ENCODE measurements at regions of chr15 and their contacts with region 1.

Region 1: DNA sequence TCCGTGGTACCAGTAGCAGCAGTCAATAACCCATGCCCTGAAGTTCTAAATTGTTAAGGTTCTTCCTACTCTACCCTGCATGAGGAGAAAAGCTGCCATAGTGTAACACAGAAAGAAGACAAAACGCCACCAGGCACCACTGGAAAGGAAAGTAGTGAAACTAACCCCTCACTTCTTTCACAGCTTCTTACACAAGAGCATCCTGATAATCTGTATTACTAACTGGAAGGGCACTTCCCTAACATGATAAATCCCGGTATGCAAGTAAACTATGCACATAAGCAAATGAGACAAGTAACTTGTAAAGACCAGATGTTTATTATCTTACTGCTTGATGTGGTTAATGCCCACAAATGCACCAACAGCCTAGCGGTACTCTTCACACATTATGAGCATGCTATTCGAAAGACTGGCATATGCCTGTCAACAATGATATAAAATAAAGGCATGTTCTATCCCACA is 141.3 kb downstream of the ADAM10 start:
- DNase-seq: peak in 1 of 2 donors; percentile 60
- ATAC-seq: peak; percentile 73 to 83 (median 77)
- H3K4me3 ChIP-seq: no peak overlapping the region
- H3K4me3 Mint-ChIP-seq: peak overlapping the region; percentile 82
- H3K27ac ChIP-seq: peak overlapping the region; percentile 45
- H3K27ac Mint-ChIP-seq: peak overlapping the region; percentile 89 to 90
- H3K4me1 ChIP-seq: peaks cover 13% of the 10 kb centered on the region
- H3K4me1 Mint-ChIP-seq: peaks cover 60 to 63% of the 10 kb centered on the region in 2 donors
- H3K27me3 ChIP-seq: no peaks in the 10 kb centered on the region
- H3K27me3 Mint-ChIP-seq: no peaks in the 10 kb centered on the region
- CTCF ChIP-seq: no peak

Region 2: GRCh38 chr15:58309963-58310928 is 297.9 kb before region 1 on chr15:
- intact Hi-C with region 1: loop called (anchors 5 kb)
- DNase-seq: no peak
- ATAC-seq: no peak
- H3K4me3 ChIP-seq: no peak overlapping the region
- H3K4me3 Mint-ChIP-seq: no peak overlapping the region
- H3K27ac ChIP-seq: no peak overlapping the region
- H3K27ac Mint-ChIP-seq: no peak overlapping the region
- H3K4me1 ChIP-seq: peaks cover 23% of the 10 kb centered on the region
- H3K4me1 Mint-ChIP-seq: peaks cover 35 to 50% of the 10 kb centered on the region in 2 donors
- H3K27me3 ChIP-seq: no peaks in the 10 kb centered on the region
- H3K27me3 Mint-ChIP-seq: no peaks in the 10 kb centered on the region
- CTCF ChIP-seq: no peak

Region 3: DNA sequence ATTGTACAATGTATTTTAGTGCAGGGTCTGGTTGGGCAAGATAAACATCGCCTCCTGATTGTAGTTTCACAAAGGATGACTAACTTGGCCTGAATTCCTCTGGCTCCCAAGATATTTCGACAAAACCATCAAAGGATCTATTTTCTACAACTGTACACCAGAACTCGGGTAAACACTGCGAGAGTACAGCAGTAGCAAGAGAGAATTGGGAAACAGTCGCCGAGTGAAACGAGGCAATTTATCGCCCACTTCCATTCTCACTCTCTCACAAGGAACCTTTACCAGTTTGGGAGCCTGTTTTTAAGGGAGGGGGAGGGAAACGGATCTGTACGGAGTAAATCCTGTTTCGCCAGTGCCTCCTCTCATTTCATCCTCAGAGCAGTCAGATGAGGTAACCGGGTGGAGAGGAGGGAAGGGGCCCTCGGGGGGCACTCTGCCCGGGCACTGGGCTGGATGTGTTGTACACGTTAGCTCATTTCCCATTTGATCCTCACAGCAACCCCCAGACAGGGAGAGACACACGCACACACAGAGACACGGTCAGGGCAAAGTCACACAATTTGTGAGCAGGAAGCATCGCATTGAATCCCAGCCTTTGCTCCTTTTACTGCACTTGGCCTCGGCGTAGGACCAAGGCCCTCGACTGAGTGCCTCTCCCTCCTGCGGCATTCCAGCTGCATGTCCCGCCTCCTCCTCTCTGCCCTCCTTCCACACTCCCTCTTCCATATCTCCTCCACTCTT is 56.2 kb before region 1 on chr15:
- intact Hi-C with region 1: loop called (anchors 5 kb)
- DNase-seq: no peak
- ATAC-seq: no peak
- H3K4me3 ChIP-seq: no peak overlapping the region
- H3K4me3 Mint-ChIP-seq: peak overlapping the region; percentile 81
- H3K27ac ChIP-seq: no peak overlapping the region
- H3K27ac Mint-ChIP-seq: peak overlapping the region; percentile 41 to 54
- H3K4me1 ChIP-seq: peaks cover 36% of the 10 kb centered on the region
- H3K4me1 Mint-ChIP-seq: peaks cover 48 to 64% of the 10 kb centered on the region in 2 donors
- H3K27me3 ChIP-seq: no peaks in the 10 kb centered on the region
- H3K27me3 Mint-ChIP-seq: peaks cover 10 to 15% of the 10 kb centered on the region in 2 donors
- CTCF ChIP-seq: no peak

Region 4: GRCh38 chr15:58906225-58906624 is 298.1 kb after region 1 on chr15:
- intact Hi-C with region 1: no loop called
- DNase-seq: no peak
- ATAC-seq: no peak
- H3K4me3 ChIP-seq: no peak overlapping the region
- H3K4me3 Mint-ChIP-seq: no peak overlapping the region
- H3K27ac ChIP-seq: no peak overlapping the region
- H3K27ac Mint-ChIP-seq: peak overlapping the region; percentile 3 to 41
- H3K4me1 ChIP-seq: peaks cover 14% of the 10 kb centered on the region
- H3K4me1 Mint-ChIP-seq: peaks cover 50 to 54% of the 10 kb centered on the region in 2 donors
- H3K27me3 ChIP-seq: no peaks in the 10 kb centered on the region
- H3K27me3 Mint-ChIP-seq: no peaks in the 10 kb centered on the region
- CTCF ChIP-seq: no peak